ENCODE measurements at regions of chr11 and their contacts with region 1.

Region 1: DNA sequence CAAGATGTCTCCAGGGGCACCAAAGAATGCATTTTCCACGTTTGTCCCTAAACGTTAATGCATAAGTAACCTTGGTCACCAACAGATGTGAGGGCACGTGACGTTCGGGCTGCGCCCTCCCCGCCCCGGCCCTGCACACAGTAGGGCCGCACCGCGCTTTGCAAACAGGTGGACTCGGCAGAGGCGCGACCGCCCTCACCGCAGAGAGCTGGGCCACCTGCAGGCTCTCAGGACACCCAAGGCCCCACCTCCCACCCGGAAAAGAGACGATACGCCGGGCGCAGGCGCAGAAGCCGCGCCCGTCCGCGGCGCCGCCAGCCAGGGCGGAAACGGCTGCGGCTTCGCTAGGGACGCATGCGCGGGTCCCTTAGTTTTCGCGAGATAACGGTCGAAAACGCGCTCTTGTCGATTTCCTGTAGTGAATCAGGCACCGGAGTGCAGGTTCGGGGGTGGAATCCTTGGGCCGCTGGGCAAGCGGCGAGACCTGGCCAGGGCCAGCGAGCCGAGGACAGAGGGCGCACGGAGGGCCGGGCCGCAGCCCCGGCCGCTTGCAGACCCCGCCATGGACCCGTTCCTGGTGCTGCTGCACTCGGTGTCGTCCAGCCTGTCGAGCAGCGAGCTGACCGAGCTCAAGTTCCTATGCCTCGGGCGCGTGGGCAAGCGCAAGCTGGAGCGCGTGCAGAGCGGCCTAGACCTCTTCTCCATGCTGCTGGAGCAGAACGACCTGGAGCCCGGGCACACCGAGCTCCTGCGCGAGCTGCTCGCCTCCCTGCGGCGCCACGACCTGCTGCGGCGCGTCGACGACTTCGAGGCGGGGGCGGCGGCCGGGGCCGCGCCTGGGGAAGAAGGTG is at the start of gene FADD:
- DNase-seq: peak; percentile 95
- ATAC-seq: peak; percentile 68
- H3K4me3 Mint-ChIP-seq: peak within 1 kb of the TSS; percentile 97
- H3K27ac Mint-ChIP-seq: peak within 1 kb of the TSS; percentile 99
- H3K4me1 Mint-ChIP-seq: peaks cover 41% of the 10 kb centered on the region
- H3K27me3 Mint-ChIP-seq: peaks cover 2% of the 10 kb centered on the region
- total RNA-seq, gene FADD: 23.5 to 32.4 TPM

Region 2: DNA sequence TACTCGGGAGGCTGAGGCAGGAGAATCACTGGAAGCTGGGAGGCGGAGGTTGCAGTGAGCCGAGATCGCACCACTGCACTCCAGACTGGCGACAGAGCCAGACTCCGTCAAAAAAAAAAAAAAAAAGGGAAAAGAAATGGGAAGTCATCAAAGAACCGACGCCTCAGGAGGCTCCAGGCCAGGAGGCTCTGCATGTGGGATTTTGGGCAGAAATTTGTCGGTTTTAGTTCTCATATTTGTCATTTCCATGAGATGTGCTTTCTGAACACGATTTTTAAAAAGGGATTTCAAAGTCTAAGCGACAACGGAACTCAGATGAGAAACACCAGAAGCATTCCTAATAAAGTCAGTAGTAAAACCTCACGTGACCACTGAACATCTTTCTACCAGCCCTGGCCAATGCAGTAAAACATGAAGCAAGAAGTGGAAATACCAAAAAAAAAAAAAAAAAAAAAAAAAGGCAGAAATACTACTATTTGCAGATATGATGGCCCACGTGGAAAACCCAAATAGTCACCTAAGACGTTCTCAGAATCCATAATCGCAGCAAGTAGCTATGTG is 527.2 kb before region 1 on chr11:
- CTCF ChIA-PET with region 1: no interaction called
- POLR2A ChIA-PET with region 1: no interaction called
- intact Hi-C with region 1: loop called (anchors 1 to 10 kb)
- DNase-seq: no peak
- ATAC-seq: no peak
- H3K4me3 Mint-ChIP-seq: peak overlapping the region; percentile 89
- H3K27ac Mint-ChIP-seq: no peak overlapping the region
- H3K4me1 Mint-ChIP-seq: peaks cover 20% of the 10 kb centered on the region
- H3K27me3 Mint-ChIP-seq: peaks cover 2% of the 10 kb centered on the region

Region 3: DNA sequence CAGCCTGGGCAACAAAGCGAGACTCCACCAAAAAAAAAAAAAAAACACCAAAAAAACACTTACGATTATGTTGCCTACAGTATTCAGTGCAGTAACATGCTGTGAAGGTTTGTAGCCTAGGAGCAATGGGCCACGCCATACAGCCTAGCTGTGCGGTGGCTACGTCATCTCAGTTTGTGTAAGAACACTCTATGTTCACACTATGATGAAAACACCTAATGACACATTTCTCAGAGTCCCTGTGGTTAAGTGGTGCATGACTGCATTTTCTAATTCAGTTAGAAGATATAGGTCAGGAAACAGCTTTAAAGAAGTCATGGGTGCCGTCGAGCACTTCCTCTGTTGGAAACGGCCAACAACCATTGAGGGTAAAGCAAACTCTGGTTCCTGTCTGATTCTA is 200.7 kb before region 1 on chr11:
- CTCF ChIA-PET with region 1: no interaction called
- POLR2A ChIA-PET with region 1: no interaction called
- intact Hi-C with region 1: loop called in 1 of 2 experiments (anchors 2 kb)
- DNase-seq: peak; percentile 72
- ATAC-seq: peak; percentile 100
- H3K4me3 Mint-ChIP-seq: no peak overlapping the region
- H3K27ac Mint-ChIP-seq: no peak overlapping the region
- H3K4me1 Mint-ChIP-seq: peaks cover 2% of the 10 kb centered on the region
- H3K27me3 Mint-ChIP-seq: peaks cover 17% of the 10 kb centered on the region

Region 4: DNA sequence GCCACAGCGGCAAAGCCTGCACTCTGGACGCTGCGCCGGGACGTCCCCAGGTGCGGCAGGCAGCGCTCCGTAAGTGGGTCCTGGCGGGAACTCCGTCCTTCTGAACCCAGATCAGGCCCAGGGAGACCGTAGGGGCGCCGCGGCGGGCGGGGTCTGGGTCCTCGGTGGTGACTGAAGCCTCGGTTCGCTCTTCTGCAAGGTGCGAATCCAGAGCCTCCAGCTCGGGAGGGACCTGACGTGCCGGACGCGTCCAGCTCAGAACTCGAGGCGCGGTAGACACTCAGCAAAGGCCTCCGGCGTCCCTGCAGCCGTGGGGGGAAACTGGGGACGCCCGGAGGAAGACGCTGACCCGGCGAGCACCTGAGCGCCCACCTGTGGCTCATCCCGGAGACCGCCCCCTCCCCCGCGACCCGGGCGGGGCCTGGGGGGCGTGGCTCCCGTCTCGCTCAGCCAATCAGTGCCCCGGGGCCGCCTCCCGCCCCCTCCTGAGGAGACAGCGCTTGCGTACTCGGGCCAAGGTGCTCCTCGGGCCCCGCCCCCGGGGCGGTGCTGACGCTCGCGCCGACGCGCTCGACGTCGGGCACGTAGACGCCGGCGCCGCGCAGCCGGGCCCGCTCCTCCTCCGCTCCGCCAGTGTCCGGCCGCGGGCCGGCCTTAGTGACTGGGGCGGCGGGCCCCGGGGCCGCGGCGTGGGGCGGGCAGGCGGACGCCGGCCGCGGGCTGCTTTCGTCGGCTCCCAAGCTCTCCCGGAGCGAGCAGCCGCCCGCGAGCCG is 67.2 kb after region 1 on chr11 and contains the start of gene PPFIA1:
- CTCF ChIA-PET with region 1: interaction called, 3 read pairs
- POLR2A ChIA-PET with region 1: no interaction called
- intact Hi-C with region 1: loop called (anchors 1 kb)
- DNase-seq: peak; percentile 97
- ATAC-seq: peak; percentile 95
- H3K4me3 Mint-ChIP-seq: peak within 1 kb of the TSS; percentile 92
- H3K27ac Mint-ChIP-seq: peak within 1 kb of the TSS; percentile 89
- H3K4me1 Mint-ChIP-seq: peaks cover 31% of the 10 kb centered on the region
- H3K27me3 Mint-ChIP-seq: peaks cover 10% of the 10 kb centered on the region
- total RNA-seq, gene PPFIA1: 26.5 to 40.5 TPM

Region 5: DNA sequence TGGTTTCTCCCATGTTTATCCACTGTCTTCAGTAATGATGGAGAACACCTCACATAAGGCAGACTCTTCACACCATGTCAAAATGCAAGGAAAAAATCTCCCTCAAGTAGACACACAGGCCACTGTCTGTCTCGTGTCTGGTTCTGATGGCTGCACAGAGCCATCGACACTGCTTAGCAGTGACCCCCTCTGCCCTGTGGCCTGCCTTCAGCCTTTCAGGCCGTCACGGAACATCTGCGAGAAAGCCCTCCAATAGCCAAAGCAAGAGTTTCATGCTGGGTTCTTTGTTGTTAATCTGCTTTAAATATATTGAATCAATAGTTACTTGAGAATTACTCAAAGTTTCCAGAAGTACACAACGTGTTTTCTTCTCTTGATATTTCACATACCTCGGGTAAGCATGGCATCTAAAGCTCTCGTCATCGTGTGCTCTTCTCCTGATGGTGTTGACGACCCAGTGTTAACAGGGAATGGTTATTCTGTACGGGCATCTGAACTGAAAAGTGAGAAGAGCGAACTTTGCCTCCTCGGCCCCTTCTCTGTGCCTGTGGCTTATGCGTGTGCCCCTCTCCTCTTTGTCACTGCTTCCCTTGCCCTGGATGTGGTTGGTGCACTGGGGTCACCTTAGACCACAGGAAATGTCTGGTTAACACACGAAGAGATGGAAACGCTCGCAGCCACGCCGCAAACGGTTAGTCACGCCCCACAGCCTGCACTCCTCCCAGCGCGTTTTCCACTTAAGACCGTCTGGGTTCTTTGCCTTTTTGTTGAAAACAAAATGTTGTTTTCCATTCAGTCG is 161.8 kb after region 1 on chr11:
- CTCF ChIA-PET with region 1: interaction called, 3 read pairs
- POLR2A ChIA-PET with region 1: no interaction called
- intact Hi-C with region 1: loop called (anchors 1 to 10 kb)
- DNase-seq: peak; percentile 87
- ATAC-seq: peak; percentile 86
- H3K4me3 Mint-ChIP-seq: peak overlapping the region; percentile 54
- H3K27ac Mint-ChIP-seq: peak overlapping the region; percentile 93
- H3K4me1 Mint-ChIP-seq: peaks cover 30% of the 10 kb centered on the region
- H3K27me3 Mint-ChIP-seq: no peaks in the 10 kb centered on the region

Region 6: DNA sequence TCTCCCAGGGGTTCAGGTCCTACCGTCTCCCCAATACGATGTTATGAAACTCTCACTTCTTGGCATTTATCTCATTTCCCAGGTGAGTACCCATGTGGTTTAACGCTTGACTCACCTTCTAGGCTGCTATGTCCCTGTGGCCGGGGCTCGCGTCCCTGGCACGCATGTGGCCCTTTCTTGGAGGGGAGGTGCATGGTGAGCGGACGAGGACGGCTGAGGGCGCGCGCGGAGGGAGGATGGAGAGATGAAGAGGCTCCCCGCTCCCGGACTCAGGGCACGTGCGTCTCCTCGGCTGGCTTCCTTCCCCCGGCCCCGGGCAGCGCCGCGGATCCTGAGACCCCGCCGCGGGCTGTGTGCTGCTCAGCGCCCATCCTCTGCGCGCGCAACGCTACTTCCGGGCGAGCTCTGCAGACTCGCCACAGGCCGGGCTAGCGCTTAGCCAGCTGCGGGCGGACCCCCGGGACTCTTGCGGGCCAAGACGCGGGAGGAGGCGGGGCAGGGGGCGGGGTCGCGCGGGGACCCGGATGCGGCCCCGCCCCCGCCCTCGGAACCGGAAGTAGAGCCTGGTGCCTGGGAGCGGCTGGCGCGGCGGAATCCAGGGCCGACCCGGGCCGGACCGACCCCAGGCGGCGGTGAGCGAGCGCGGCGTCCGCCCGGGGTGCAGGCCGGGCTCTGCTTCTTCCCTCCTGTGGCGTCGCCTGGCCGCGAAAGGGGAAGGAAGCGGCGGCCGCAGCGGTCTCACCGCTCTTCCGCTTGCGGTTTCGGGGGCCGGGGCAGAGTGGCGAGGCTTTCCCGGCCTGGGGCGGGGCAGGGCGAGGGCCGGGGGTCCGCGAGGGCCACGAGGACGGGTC is 195.1 kb after region 1 on chr11 and contains the start of gene CTTN:
- CTCF ChIA-PET with region 1: no interaction called
- POLR2A ChIA-PET with region 1: no interaction called
- intact Hi-C with region 1: loop called in 1 of 2 experiments (anchors 1 kb)
- DNase-seq: peak; percentile 84
- ATAC-seq: peak; percentile 71
- H3K4me3 Mint-ChIP-seq: peak within 1 kb of the TSS; percentile 88
- H3K27ac Mint-ChIP-seq: peak within 1 kb of the TSS; percentile 89
- H3K4me1 Mint-ChIP-seq: peaks cover 30% of the 10 kb centered on the region
- H3K27me3 Mint-ChIP-seq: peaks cover 20% of the 10 kb centered on the region
- total RNA-seq, gene CTTN: 40.9 to 41.1 TPM

Region 7: DNA sequence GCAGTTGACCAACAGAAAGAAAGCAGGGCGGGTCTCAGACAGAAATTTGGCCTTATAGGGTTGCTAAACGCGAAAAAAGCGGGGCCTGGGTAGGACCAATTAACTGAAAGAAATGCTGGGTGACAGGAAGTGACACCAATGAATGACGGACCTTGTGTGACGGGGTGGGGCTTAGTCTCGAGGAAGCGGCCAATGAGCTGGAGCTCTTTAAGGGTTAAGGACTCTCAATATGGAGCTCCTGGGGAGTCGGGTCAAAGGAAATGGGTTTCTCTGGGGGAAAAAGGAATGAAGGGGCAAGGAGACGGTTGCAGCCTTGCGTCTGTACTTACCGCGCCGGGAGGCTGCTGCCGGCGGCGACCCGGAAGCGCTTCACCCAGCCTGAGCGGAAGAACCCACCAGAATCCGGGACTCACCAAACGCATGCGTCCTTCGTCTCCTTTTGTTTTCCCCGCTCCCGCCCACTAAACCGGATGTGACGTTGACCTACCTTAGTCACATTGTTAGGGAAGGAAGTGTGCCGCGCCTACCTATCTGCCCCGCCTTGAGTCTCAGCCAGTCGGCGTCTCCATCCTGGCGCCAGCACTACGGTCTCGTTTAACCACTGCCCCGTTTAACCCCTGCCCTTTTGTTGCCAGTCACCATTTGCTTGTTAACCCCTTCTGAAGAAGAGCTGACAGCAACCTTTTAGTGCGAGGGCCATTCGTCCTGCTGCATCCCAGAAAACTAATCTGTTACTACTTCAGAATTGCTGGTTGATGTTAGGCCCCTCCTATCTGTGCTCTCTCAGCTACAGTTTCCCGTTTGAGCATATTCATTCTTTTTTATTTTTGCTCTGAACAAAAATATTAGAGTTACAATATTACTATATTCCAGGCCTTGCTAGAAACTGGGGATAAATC is 1909.4 kb after region 1 on chr11 and contains the start of gene ANAPC15:
- CTCF ChIA-PET with region 1: no interaction called
- POLR2A ChIA-PET with region 1: no interaction called
- intact Hi-C with region 1: loop called in 1 of 2 experiments (anchors 10 kb)
- DNase-seq: peak; percentile 100
- ATAC-seq: peak; percentile 89
- H3K4me3 Mint-ChIP-seq: peak within 1 kb of the TSS; percentile 92
- H3K27ac Mint-ChIP-seq: peak within 1 kb of the TSS; percentile 98
- H3K4me1 Mint-ChIP-seq: peaks cover 16% of the 10 kb centered on the region
- H3K27me3 Mint-ChIP-seq: no peaks in the 10 kb centered on the region
- total RNA-seq, gene ANAPC15: 60.3 to 76.1 TPM